ENCODE measurements at regions of chr7 and their contacts with region 1.

Region 1: GRCh38 chr7:98831641-98832221 is 38.1 kb downstream of the TMEM130 start:
- DNase-seq: peak; percentile 65
- H3K4me3 Mint-ChIP-seq: no peak overlapping the region
- H3K27ac Mint-ChIP-seq: no peak overlapping the region
- H3K4me1 Mint-ChIP-seq: no peaks in the 10 kb centered on the region
- H3K27me3 Mint-ChIP-seq: peaks cover 5% of the 10 kb centered on the region

Region 2: DNA sequence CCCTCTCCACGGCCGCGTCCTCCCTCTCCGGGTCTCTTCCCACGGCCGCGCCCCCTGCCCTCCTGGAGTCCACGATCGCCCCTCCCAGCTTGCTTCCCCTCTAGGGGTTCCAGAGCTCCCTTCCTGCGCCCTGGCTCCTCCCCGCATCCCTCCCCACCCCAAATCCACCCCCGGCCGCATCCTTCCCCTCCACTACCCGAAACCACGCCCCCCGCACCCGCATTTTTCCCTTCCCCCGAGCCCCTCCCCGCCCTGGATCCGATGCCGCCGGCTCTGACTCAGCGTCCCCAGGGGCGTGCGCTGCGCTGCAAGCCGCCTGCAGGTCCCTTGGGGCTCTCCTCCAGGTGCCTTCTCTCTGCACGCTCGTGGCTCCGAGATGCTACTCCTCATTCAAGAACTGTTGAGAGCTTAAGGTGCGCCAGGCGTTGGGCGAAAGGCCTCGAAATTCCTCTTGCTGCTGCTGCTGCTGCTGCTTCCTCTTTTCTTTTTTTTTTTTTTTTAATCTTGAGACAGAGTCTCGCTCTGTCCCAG is 38.5 kb after region 1 on chr7:
- CTCF ChIA-PET with region 1: interaction called, 20 read pairs
- POLR2A ChIA-PET with region 1: no interaction called
- intact Hi-C with region 1: loop called (anchors 1 kb)
- DNase-seq: peak; percentile 86
- H3K4me3 Mint-ChIP-seq: peak overlapping the region; percentile 66
- H3K27ac Mint-ChIP-seq: no peak overlapping the region
- H3K4me1 Mint-ChIP-seq: peaks cover 2% of the 10 kb centered on the region
- H3K27me3 Mint-ChIP-seq: peaks cover 13% of the 10 kb centered on the region